ENCODE measurements at regions of chr19 and their contacts with region 1.

Region 1: GRCh38 chr19:17183858-17184321 is 31.3 kb upstream of the USE1 start:
- DNase-seq: peak in 3 of 10 donors; percentile 33 to 44 (median 39)
- ATAC-seq: peak; percentile 69 to 75
- H3K4me3 Mint-ChIP-seq: peak overlapping the region; percentile 83 to 92 (median 88)
- H3K27ac Mint-ChIP-seq: peak overlapping the region; percentile 86 to 98 (median 96)
- H3K4me1 Mint-ChIP-seq: peaks cover 11 to 39% (median 29%) of the 10 kb centered on the region in 4 donors
- H3K27me3 Mint-ChIP-seq: no peaks in the 10 kb centered on the region

Region 2: DNA sequence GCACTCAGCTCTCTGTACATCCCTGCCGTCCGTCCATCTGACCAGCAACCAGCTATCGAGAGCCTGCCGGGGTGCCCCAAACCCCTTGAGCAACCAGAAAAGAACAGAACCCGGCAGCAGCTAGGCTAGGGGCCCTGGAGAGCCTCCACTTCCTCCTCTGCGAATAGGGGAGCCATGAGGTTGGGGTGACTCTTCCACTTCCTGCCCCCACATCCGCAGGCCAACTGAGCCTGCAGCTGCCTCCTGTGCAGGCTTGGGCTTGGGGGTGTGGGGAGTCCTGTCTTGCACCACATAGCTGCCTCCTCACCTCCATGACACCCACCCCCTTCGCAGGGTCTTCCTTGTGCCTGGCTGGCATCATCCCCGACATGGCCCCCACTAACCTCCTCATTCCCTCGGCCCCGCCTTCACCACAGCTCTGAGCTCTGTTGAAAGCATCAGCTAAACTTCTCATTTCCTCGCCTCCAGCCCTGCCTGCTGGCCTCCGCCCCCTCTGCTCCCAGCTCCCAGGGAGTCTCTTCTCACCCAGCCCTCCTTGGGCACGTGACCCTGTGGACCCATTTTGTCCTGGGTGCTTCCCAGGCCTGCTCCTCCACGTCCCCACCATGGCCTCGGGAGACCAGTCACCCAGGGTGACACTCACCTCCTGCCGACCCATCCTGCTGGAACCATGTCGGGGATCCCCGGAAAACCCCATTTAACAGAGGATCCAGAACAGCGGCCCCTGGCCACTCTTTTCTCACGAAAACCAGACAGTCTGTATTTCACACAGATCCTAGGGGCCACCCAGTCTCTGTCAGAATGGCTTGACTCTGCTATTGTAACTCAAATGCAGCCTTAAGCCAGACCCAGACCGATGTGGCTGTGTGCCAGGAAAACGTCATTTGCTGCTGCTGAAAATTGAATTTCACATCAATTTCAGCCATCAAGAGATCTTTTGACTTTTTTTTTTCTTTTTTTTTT is 57.9 kb before region 1 on chr19:
- POLR2A ChIA-PET with region 1: interaction called, 29 read pairs
- DNase-seq: peak; percentile 55 to 92 (median 79)
- ATAC-seq: peak; percentile 86 to 87
- H3K4me3 Mint-ChIP-seq: peak overlapping the region; percentile 80 to 100 (median 90)
- H3K27ac Mint-ChIP-seq: peak overlapping the region; percentile 98 to 100 (median 99)
- H3K4me1 Mint-ChIP-seq: peaks cover 17 to 79% (median 67%) of the 10 kb centered on the region in 4 donors
- H3K27me3 Mint-ChIP-seq: no peaks in the 10 kb centered on the region

Region 3: DNA sequence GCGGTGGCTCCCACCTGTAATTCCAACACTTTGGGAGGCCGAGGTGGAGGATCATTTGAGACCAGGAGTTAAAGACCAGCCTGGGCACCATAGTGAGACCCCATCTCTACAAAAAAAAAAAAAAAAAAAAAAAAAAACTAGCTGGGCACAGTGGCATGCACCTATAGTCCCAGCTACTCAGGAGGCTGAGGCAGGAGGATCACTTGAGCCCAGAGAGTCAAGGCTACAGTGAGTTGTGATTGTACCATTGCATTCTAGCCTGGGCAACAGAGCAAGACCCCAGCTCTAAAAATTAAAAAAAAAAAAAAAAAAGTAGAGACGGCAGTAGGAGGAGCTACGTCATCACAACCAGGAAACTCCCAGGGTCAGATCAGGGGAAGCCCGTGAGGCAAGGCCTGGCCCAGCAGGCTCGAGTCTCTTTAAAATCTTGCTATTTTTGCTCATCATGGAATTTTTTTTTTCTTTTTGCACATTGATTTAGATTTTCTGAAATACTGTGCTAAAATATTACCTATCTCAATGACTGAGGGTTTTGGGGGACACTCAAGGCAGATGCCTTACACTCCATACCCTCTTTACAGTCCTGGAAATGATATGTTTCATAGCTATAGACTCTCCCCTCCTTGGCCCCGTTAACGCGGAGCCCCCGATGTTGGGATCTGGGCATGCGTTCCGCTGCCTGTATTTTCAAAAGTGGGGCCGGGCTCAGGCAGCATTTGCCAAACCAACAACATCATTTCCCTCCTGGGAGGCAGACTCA is 13.2 kb before region 1 on chr19:
- POLR2A ChIA-PET with region 1: interaction called, 13 read pairs
- DNase-seq: no peak
- ATAC-seq: no peak
- H3K4me3 Mint-ChIP-seq: peak overlapping the region in 1 of 10 donors; percentile 7
- H3K27ac Mint-ChIP-seq: peak overlapping the region in 2 of 10 donors; percentile 13 to 21
- H3K4me1 Mint-ChIP-seq: no peaks in the 10 kb centered on the region
- H3K27me3 Mint-ChIP-seq: no peaks in the 10 kb centered on the region

Region 4: GRCh38 chr19:17226002-17226933 is 42.4 kb after region 1 on chr19 and contains the start of gene OCEL1:
- POLR2A ChIA-PET with region 1: interaction called, 13 read pairs
- DNase-seq: peak; percentile 92 to 99 (median 94)
- ATAC-seq: peak; percentile 90 to 92
- H3K4me3 Mint-ChIP-seq: peak within 1 kb of the TSS; percentile 88 to 99 (median 94)
- H3K27ac Mint-ChIP-seq: peak within 1 kb of the TSS; percentile 66 to 99 (median 96)
- H3K4me1 Mint-ChIP-seq: peaks cover 7 to 17% (median 11%) of the 10 kb centered on the region in 4 donors
- H3K27me3 Mint-ChIP-seq: no peaks in the 10 kb centered on the region
- polyA plus RNA-seq, gene OCEL1: 21.9 to 52.4 (median 40.1) TPM

Region 5: GRCh38 chr19:17376935-17377600 is 193.2 kb after region 1 on chr19 and contains the start of gene PLVAP:
- POLR2A ChIA-PET with region 1: no interaction called
- DNase-seq: no peak
- ATAC-seq: no peak
- H3K4me3 Mint-ChIP-seq: no peak within 1 kb of the TSS
- H3K27ac Mint-ChIP-seq: peak within 1 kb of the TSS in 1 of 10 donors; percentile 62
- H3K4me1 Mint-ChIP-seq: peaks cover 0 to 9% (median 4%) of the 10 kb centered on the region in 4 donors
- H3K27me3 Mint-ChIP-seq: peaks cover 0 to 18% (median 8%) of the 10 kb centered on the region in 5 donors
- polyA plus RNA-seq, gene PLVAP: not detected

Measured in naive thymus-derived CD8-positive, alpha-beta T cell (primary cell).